Sciatic nerve (tissue), 2 donors: ENCODE measurements at regions of chr9 and their contacts with region 1.

Region 1: GRCh38 chr9:83219152-83219923 is 156.4 kb upstream of the RASEF start:
- DNase-seq: peak; percentile 80
- ATAC-seq: peak; percentile 98

Region 2: GRCh38 chr9:83144492-83144891 is 74.8 kb before region 1 on chr9:
- intact Hi-C with region 1: no loop called
- DNase-seq: no peak
- ATAC-seq: no peak

Region 3: DNA sequence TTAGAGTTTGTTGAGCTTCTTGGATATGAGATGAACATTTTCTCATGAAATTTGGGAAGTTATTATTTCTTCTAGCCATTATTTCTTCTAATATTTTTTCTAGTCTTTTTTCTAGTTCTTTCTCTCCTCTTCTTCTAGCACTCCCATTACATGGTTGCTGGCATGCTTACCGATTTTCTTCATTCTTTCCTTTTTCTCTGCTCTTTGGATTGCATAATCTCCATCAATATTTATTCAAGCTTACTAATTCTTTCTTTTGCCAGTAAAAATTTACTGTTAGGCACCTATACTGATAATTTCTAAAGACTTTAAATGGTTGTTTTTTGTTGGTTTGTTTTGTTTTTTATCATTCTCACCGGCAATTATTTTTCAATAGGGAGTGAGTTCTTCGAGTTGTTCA is 41.6 kb before region 1 on chr9:
- intact Hi-C with region 1: no loop called
- DNase-seq: no peak
- ATAC-seq: no peak

Region 4: GRCh38 chr9:83544002-83544698 is 324.8 kb after region 1 on chr9:
- intact Hi-C with region 1: loop called (anchors 10 kb)
- DNase-seq: no peak
- ATAC-seq: peak; percentile 64